Pancreas (tissue), 10 donors: ENCODE measurements at regions of chr5 and their contacts with region 1.

Region 1: DNA sequence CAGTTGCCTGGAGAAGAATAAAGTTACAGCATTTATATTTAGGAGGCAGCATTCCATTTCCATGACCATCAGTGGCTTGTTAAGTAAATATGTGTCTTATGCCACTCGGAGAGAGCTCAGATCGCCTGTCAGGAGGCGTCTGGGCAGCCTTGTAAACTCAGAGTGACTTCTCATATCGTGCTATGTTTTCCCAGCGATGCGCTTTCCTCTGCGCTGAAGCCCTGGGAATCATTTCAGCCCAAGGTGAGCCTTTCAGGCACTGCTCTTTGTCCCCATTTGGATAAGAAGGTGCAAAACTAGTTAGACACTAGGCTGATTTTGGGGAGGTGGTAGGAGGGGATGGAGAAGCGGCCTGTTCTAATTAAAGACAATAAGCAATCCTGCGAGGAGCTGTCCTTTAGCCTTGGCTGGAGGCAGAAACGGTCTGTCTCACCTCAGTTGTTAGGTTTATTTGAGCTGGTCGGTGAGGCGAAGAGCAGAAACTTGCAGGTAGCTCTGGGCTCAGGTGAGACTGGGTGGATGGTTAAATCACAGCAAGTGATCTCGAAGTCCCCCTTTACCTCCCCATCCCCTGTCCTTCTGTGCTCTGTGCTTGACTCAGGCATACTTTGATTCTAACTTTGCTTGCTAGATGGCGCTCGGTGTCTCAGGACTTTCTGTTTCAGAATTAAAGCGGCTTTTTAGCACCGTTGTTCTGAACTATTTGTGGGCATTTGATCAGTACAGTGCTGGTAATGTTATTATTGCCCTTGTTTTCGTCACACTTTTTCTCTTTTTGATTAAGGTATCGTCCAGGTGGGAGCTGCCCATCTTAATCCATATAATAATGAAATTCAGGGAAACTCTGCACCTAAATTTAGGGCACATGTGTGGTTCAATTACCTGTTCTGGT is 24.6 kb downstream of the NR2F1 start:
- DNase-seq: no peak
- ATAC-seq: peak; percentile 70 to 85 (median 84)
- H3K4me3 ChIP-seq: no peak overlapping the region
- H3K27ac ChIP-seq: no peak overlapping the region
- H3K4me1 ChIP-seq: peaks cover 0 to 5% (median 0%) of the 10 kb centered on the region in 3 donors
- H3K27me3 ChIP-seq: peaks cover 7 to 71% (median 27%) of the 10 kb centered on the region in 4 donors
- CTCF ChIP-seq: peak in 1 of 4 donors; percentile 15

Region 2: GRCh38 chr5:93789173-93790070 is 181.8 kb after region 1 on chr5:
- intact Hi-C with region 1: loop called in 1 of 3 experiments (anchors 10 kb)
- DNase-seq: no peak
- ATAC-seq: no peak
- H3K4me3 ChIP-seq: no peak overlapping the region
- H3K27ac ChIP-seq: no peak overlapping the region
- H3K4me1 ChIP-seq: no peaks in the 10 kb centered on the region
- H3K27me3 ChIP-seq: no peaks in the 10 kb centered on the region
- CTCF ChIP-seq: no peak

Region 3: DNA sequence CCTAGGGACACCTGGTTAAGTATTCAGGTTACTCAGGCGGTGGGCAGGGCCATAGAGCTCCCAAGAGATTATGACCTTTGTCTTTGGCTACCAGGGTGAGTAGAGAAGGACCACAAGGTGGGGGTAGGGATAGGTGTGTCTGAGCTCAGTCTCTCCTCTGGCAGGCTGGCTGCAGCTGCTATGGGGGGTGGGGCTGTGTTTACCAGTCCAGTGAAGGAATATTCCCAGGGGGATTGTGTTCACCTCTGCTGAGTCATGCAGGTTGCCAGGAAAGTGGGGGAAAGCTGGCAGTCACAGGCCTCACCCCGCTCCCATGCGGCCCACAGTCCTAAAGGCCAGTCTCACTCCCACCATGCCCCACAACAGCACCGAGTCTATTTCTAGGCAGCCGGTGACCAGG is 187.3 kb after region 1 on chr5:
- intact Hi-C with region 1: loop called in 2 of 3 experiments (anchors 5 to 10 kb)
- DNase-seq: peak in 1 of 6 donors; percentile 12
- ATAC-seq: no peak
- H3K4me3 ChIP-seq: no peak overlapping the region
- H3K27ac ChIP-seq: no peak overlapping the region
- H3K4me1 ChIP-seq: no peaks in the 10 kb centered on the region
- H3K27me3 ChIP-seq: no peaks in the 10 kb centered on the region
- CTCF ChIP-seq: no peak